Endothelial cell of umbilical vein (primary cell): ENCODE measurements at regions of chr10 and their contacts with region 1.

Region 1: GRCh38 chr10:43683451-43684291 is 35.0 kb upstream of the ZNF32 start:
- DNase-seq: no peak
- H3K4me3 ChIP-seq: no peak overlapping the region
- H3K27ac ChIP-seq: no peak overlapping the region
- H3K4me1 ChIP-seq: no peaks in the 10 kb centered on the region
- H3K27me3 ChIP-seq: peaks cover 0 to 6% of the 10 kb centered on the region in 2 experiments
- CTCF ChIP-seq: peak; percentile 46 to 65
- POLR2A ChIP-seq: no peak

Region 2: GRCh38 chr10:44386546-44387052 is 702.9 kb after region 1 on chr10:
- CTCF ChIA-PET with region 1: interaction called, 90 read pairs
- POLR2A ChIA-PET with region 1: no interaction called
- dilution Hi-C with region 1: no loop called
- intact Hi-C with region 1: no loop called
- DNase-seq: peak; percentile 37
- H3K4me3 ChIP-seq: no peak overlapping the region
- H3K27ac ChIP-seq: no peak overlapping the region
- H3K4me1 ChIP-seq: no peaks in the 10 kb centered on the region
- H3K27me3 ChIP-seq: peaks cover 15 to 25% of the 10 kb centered on the region in 2 experiments
- CTCF ChIP-seq: peak; percentile 81 to 94
- POLR2A ChIP-seq: no peak